Activated naive CD4-positive, alpha-beta T cell treated with anti-CD3 and anti-CD28 coated beads for 36 hours (primary cell): ENCODE measurements at regions of chr9 and their contacts with region 1.

Region 1: DNA sequence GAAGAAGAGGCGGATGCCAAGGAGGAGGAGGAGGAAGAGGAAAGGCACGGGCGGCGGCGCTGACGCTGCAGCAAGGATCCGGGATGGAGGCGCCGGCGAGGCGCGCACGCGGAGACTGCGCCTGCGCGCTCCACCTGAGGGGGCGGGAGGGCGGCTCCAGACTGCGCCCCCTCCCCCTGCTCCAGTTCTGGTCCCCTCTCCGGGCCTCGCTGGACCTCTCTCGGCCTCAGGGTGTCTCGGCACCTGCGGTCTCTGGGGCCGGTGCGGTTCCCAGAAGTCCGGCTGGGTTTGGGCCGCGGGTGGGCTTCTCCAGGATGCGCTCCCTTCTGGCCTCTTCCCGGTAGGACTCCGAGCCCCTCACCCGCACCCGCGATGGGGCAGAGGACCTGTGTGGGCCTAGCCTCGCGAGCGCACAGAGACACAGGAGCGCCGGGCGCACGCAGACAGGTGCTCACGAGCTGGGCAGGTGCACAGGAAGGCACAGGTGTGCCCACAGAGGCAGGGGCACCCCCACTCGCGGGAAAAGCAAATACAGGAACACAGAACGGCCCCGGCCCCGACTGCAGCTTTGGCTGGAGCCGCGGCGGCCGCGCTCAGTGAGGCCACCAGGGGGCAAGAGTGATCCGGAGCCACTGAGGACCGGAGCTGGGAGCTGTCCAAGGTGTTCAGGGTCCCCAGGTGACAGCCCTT is at the start of gene NPDC1:
- DNase-seq: peak; percentile 90
- H3K4me3 Mint-ChIP-seq: peak within 1 kb of the TSS; percentile 50
- H3K27ac Mint-ChIP-seq: no peak within 1 kb of the TSS
- H3K4me1 Mint-ChIP-seq: peaks cover 14% of the 10 kb centered on the region
- H3K27me3 Mint-ChIP-seq: peaks cover 47% of the 10 kb centered on the region
- total RNA-seq, gene NPDC1: 14.2 to 15.9 TPM

Region 2: DNA sequence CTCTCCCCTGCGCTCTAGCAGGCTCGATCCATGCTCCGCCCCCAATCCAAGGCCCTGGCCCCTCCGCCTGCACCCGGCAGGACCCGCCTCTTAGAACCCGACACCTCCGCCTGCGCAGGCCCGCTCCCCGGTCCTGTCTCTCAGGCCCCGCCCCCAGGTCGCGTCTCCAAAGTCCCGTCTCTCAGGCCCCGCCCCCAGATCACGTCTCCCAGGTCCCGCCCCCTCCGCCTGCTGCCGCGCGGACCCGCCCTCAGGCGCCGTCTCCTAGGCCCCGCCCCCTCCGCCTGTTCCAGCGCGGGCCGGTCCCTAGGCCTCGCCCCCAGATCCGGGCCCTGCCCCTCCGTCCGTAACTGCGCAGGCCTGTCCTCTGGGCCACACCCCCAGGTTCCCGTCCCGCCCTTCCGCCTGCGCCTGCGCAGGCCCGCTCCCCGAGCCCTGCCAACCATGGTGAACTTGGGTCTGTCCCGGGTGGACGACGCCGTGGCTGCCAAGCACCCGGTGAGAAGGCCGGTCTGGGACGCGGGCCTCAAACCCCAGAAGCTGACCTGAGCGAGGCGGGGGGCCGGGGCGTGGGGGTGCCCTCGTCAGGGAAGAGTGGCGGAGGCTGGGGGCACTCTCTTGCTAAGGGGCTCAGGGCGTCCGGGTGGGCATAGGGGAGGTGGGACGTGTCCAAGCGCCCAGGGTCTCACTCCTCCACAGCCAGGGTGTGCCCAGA is 255.2 kb before region 1 on chr9 and contains the start of gene TMEM141:
- CTCF ChIA-PET with region 1: no interaction called
- intact Hi-C with region 1: no loop called
- DNase-seq: peak; percentile 100
- H3K4me3 Mint-ChIP-seq: peak within 1 kb of the TSS; percentile 83
- H3K27ac Mint-ChIP-seq: peak within 1 kb of the TSS; percentile 79
- H3K4me1 Mint-ChIP-seq: peaks cover 19% of the 10 kb centered on the region
- H3K27me3 Mint-ChIP-seq: no peaks in the 10 kb centered on the region
- total RNA-seq, gene TMEM141: 38.1 to 39.6 TPM

Region 3: DNA sequence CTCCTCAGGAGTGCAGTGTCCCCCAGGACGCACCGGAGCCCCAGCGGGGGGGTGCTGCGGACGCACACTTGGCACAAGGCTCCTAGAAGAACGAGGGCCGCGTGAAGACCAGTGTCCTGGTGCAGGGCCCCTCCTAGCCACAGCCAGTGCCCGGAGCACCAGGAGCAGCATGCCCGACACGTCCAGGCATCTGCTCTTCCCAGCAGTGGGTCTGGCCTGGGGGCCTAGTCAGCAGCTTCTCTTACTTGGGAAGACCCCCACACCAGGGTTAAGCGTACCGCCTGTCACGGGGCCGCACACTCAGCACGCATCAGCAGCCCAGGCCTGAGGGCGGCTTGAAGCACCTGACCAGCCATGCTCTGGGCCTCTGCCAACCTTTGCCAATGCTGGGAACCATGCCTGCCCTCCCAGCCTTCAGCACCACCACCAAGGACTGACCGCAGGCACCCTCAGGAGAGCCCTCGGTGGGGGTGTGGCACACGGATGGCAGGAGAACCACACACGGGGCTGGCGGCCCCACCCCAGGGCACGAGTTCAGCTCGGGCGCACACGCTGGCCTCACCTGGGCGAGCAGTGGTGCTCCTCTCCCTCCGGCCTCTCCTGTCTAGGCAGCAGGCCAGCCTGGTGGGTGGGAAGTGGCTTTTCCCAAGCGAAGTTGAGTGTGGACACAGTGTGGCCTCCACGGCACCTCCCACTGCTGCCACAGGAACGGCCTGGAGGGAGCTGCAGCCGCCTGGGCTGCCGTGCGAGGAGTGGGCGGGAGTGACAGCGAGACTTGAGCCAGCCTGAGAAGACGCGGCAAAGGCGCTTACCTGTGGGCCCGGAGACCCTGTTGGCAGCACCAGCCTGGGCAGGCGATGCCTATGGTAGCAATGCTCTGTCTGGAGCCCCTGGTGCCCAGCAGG is 216.0 kb before region 1 on chr9:
- CTCF ChIA-PET with region 1: no interaction called
- intact Hi-C with region 1: no loop called
- DNase-seq: no peak
- H3K4me3 Mint-ChIP-seq: no peak overlapping the region
- H3K27ac Mint-ChIP-seq: no peak overlapping the region
- H3K4me1 Mint-ChIP-seq: no peaks in the 10 kb centered on the region
- H3K27me3 Mint-ChIP-seq: no peaks in the 10 kb centered on the region

Region 4: DNA sequence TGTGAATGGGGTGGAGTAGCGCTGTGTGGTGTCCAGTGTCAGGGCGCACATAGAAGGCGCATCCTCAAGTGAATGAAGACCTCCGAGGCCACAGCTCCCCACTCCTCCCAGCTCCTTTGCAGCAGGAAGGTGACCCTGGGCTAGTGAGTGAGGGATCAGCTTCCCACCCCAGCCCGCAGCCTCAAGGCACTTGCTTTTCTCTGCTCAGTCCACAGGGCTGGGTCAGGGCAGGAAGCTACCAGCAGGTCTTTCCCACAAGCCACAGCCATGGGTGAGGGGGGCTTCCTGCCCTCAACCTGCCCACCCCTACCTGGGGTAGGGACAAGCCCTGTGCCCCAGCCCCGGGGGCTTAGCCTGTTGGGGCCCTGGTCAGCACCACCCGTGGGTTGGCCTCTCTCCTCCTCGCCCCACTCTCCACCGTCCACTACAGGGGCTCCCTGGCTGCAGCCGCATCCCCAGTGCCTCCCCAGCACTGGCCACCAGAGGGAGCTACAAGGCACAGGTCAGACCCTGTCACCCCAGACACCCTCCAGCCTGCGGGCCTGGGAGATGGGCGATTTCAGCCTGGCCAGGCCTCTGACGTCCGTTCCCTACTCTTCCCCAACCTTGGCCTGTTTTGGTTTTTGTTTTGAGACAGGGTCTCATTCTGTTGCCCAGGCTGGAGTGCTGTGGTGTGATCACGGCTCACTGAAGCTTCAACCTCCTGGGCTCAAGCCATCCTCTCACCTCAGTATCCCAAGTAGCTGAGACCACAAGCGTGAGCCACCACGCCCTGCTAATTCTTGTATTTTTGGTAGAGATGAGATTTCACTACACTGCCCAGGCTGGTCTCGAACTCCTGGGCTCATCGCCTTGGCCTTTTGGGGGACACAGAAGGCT is 16.9 kb before region 1 on chr9:
- CTCF ChIA-PET with region 1: interaction called, 10 read pairs
- intact Hi-C with region 1: no loop called
- DNase-seq: peak; percentile 82
- H3K4me3 Mint-ChIP-seq: peak overlapping the region; percentile 56
- H3K27ac Mint-ChIP-seq: no peak overlapping the region
- H3K4me1 Mint-ChIP-seq: peaks cover 34% of the 10 kb centered on the region
- H3K27me3 Mint-ChIP-seq: peaks cover 5% of the 10 kb centered on the region

Region 5: GRCh38 chr9:137057545-137057944 is 11.3 kb after region 1 on chr9:
- CTCF ChIA-PET with region 1: interaction called, 34 read pairs
- intact Hi-C with region 1: no loop called
- DNase-seq: no peak
- H3K4me3 Mint-ChIP-seq: no peak overlapping the region
- H3K27ac Mint-ChIP-seq: no peak overlapping the region
- H3K4me1 Mint-ChIP-seq: no peaks in the 10 kb centered on the region
- H3K27me3 Mint-ChIP-seq: peaks cover 2% of the 10 kb centered on the region

Region 6: GRCh38 chr9:137070201-137070905 is 24.1 kb after region 1 on chr9 and contains the start of gene SAPCD2:
- CTCF ChIA-PET with region 1: interaction called, 37 read pairs
- intact Hi-C with region 1: loop called (anchors 1 kb)
- DNase-seq: peak; percentile 86
- H3K4me3 Mint-ChIP-seq: peak within 1 kb of the TSS; percentile 56
- H3K27ac Mint-ChIP-seq: peak within 1 kb of the TSS; percentile 40
- H3K4me1 Mint-ChIP-seq: peaks cover 9% of the 10 kb centered on the region
- H3K27me3 Mint-ChIP-seq: peaks cover 3% of the 10 kb centered on the region
- total RNA-seq, gene SAPCD2: 3.8 to 3.9 TPM

Region 7: GRCh38 chr9:137169896-137170358 is 123.7 kb after region 1 on chr9 and contains the start of gene LRRC26:
- CTCF ChIA-PET with region 1: no interaction called
- intact Hi-C with region 1: loop called (anchors 2 kb)
- DNase-seq: no peak
- H3K4me3 Mint-ChIP-seq: peak within 1 kb of the TSS; percentile 45
- H3K27ac Mint-ChIP-seq: no peak within 1 kb of the TSS
- H3K4me1 Mint-ChIP-seq: peaks cover 7% of the 10 kb centered on the region
- H3K27me3 Mint-ChIP-seq: peaks cover 24% of the 10 kb centered on the region
- total RNA-seq, gene LRRC26: not detected

Region 8: DNA sequence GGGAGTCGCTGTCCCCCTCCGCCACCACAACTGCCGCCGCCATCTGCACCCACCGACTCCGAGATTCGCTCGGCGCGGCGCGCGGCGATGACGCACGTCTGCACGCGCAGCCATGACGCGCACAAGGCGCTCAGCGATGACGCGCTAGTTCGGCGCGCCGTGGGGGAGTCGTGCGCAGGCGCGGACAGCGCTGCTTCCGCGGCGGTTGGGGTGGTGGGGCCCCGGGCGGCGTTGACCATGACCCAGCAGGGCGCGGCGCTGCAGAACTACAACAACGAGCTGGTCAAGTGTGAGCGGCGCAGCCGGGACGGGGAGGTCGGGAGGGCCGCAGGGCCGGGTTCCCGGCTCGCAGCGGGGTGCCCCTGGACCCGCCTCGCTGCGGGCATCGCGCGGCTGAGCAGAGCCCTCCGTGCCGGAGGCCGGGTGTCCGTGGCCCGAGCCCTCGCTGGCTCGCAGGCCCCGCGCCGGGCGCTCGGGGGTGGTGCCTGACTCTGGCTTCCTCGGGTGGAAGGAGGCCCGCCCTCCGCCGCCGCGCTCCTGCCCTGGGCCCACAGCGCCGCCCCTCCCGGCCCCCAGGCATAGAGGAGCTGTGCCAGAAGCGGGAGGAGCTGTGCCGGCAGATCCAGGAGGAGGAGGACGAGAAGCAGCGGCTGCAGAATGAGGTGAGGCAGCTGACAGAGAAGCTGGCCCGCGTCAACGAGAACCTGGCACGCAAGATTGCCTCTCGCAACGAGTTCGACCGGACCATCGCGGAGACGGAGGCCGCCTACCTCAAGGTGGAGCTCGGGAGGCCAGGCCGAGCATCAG is 142.4 kb after region 1 on chr9 and contains the starts of genes ANAPC2 and SSNA1:
- CTCF ChIA-PET with region 1: no interaction called
- intact Hi-C with region 1: no loop called
- DNase-seq: peak; percentile 92
- H3K4me3 Mint-ChIP-seq: peak within 1 kb of the TSS; percentile 92
- H3K27ac Mint-ChIP-seq: peak within 1 kb of the TSS; percentile 88
- H3K4me1 Mint-ChIP-seq: peaks cover 39% of the 10 kb centered on the region
- H3K27me3 Mint-ChIP-seq: no peaks in the 10 kb centered on the region
- total RNA-seq, gene ANAPC2: 34.8 to 36.6 TPM
- total RNA-seq, gene SSNA1: 48.2 to 49.9 TPM

Region 9: DNA sequence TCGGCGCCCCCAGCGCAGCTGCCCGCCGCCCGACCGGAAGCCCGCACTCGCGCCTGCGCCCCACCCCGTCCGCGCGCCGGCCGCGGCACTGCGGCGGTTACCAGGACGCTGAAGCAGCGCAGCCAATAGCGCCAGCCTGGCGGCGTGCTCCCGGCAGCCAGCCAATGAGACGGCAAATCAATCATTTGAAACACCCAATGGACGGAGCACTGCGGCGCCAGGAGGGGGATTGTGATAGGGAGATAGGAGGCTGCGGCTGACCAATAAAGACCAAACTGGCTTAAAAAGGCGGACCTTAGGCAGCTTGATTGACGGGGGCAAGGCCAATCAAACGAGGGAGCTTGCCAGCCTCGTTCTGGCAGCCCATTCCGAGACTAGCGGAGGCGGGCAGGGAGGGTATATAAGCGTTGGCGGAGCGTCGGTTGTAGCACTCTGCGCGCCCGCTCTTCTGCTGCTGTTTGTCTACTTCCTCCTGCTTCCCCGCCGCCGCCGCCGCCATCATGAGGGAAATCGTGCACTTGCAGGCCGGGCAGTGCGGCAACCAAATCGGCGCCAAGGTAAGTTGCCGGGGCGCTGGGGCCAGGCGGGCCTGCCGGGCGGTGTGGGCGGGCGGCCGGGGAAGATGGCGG is 194.7 kb after region 1 on chr9 and contains the start of gene TUBB4B:
- CTCF ChIA-PET with region 1: no interaction called
- intact Hi-C with region 1: loop called (anchors 5 kb)
- DNase-seq: peak; percentile 99
- H3K4me3 Mint-ChIP-seq: peak within 1 kb of the TSS; percentile 88
- H3K27ac Mint-ChIP-seq: peak within 1 kb of the TSS; percentile 94
- H3K4me1 Mint-ChIP-seq: peaks cover 34% of the 10 kb centered on the region
- H3K27me3 Mint-ChIP-seq: no peaks in the 10 kb centered on the region
- total RNA-seq, gene TUBB4B: 193 to 196 TPM

Region 10: DNA sequence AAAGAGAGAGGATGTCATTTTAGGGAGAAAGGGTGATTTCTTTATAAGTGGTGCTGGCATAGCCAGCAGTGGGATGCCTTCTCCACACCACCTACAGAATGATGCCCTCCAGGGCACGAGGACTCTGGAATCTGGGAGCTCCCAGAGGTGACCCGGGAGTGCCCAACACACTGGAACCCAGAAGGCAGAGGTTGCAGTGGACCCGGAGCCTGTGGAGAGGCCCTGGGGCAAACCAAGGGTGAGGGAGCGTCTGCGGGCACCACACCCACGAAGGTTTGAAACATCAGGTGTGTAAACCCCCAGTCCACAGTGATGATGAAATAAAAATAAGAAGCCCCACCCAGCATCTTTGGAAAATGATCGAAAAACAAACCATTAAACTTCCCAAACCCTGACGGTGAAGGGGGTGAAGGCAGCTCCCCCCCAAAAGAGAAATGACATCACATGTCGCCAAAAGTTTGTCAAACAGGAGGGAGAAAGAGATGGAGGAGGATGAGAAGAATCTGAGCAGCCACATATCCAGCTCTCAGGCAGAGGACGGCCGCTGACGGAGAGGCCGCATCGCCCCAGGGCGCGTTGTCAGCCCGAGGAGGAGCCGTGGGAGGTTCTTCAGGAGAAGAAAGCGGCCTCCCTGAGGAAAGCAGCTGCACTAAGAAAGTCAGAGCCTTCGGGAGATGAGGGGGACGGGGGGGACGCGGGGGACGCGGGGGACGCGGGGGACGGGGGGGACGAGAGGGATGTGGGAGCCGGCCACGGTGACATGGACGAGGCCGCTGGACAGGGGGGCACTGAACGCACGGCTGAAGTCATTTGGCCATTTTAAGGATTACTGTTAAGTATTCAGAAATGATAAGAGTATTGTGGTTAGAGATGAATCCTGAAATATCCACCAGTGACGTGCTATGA is 456.0 kb after region 1 on chr9:
- CTCF ChIA-PET with region 1: no interaction called
- intact Hi-C with region 1: no loop called
- DNase-seq: no peak
- H3K4me3 Mint-ChIP-seq: no peak overlapping the region
- H3K27ac Mint-ChIP-seq: peak overlapping the region; percentile 59
- H3K4me1 Mint-ChIP-seq: peaks cover 5% of the 10 kb centered on the region
- H3K27me3 Mint-ChIP-seq: no peaks in the 10 kb centered on the region